Activated T-helper 1 cell treated with anti-CD3 and anti-CD28 coated beads, Interleukin-12 subunit alpha, Interleukin-12 subunit beta, Interleukin-2, Interleukin-4 antibody, amounts not matched to agents 30 ng/mL and 10 ng/mL and 1 ng/mL, durations not matched to agents 14 hours and 24 hours and 36 hours (primary cell): ENCODE measurements at regions of chr2 and their contacts with region 1.

Region 1: DNA sequence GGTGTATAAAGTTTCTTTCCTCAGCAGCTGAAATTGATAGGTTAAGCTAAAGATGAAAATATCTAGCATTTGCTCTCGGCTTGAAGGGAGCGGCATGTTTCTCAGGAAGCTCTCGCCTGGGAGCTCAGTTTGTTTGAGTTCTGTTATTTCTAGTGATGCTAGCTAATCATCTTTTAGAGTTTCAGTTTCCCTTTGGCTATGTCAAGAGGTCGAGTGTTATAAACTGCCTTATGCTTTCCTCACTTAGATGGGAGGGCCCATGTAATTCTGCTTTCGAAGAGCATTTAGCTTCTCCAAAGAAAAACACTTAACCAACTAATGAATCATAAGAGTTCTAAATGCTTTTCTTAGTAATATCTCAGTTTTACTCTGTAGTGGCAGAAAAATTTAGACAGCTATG is 33.6 kb downstream of the PLCL1 start:
- DNase-seq: peak; percentile 11
- H3K4me3 Mint-ChIP-seq: peak overlapping the region; percentile 54
- H3K27ac Mint-ChIP-seq: peak overlapping the region; percentile 76
- H3K4me1 Mint-ChIP-seq: peaks cover 42% of the 10 kb centered on the region
- H3K27me3 Mint-ChIP-seq: peaks cover 3% of the 10 kb centered on the region

Region 2: DNA sequence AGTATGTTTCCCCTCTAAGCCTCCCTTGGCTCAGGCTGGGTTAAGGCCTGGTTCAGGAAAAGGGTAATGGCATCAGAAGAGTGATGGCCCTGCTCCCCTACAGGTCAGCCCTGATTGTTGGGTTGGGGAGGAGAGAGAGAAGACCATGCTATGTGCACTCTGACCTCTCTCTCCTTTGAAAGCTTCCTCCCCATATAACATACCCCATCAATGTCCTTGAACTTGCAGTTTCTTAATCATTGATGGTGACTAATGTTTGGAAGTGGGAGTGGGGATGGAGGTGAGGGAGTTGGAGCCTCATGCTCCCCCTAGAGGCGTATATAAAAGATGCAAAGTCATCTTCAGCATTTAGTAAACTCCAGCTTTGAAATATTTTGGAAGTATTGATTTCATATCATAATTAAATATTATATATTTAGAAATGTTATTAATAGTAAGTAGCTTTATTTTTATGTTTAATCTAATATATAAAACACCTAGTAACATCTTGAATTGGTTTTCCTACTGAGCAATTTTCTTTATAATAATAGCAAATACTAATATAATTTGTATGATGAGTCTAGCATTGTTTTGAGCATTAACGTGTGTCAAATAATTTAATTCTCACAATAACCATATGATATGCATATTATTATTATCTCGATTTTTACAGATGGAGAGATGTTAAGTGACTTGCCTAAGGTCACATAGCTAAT is 24.8 kb before region 1 on chr2:
- intact Hi-C with region 1: loop called (anchors 2 kb)
- DNase-seq: no peak
- H3K4me3 Mint-ChIP-seq: no peak overlapping the region
- H3K27ac Mint-ChIP-seq: no peak overlapping the region
- H3K4me1 Mint-ChIP-seq: peaks cover 21% of the 10 kb centered on the region
- H3K27me3 Mint-ChIP-seq: no peaks in the 10 kb centered on the region

Region 3: GRCh38 chr2:197851451-197851850 is 13.4 kb after region 1 on chr2:
- intact Hi-C with region 1: loop called (anchors 1 kb)
- DNase-seq: no peak
- H3K4me3 Mint-ChIP-seq: no peak overlapping the region
- H3K27ac Mint-ChIP-seq: no peak overlapping the region
- H3K4me1 Mint-ChIP-seq: peaks cover 22% of the 10 kb centered on the region
- H3K27me3 Mint-ChIP-seq: no peaks in the 10 kb centered on the region

Region 4: GRCh38 chr2:197934934-197935289 is 96.9 kb after region 1 on chr2:
- intact Hi-C with region 1: no loop called
- DNase-seq: no peak
- H3K4me3 Mint-ChIP-seq: peak overlapping the region; percentile 1
- H3K27ac Mint-ChIP-seq: peak overlapping the region; percentile 23
- H3K4me1 Mint-ChIP-seq: peaks cover 16% of the 10 kb centered on the region
- H3K27me3 Mint-ChIP-seq: peaks cover 3% of the 10 kb centered on the region